ENCODE measurements at regions of chr5 and their contacts with region 1.

Region 1: GRCh38 chr5:151318850-151319732 is 15.5 kb upstream of the SLC36A3 start:
- DNase-seq: peak in 1 of 2 donors; percentile 42
- ATAC-seq: peak in 1 of 2 donors; percentile 14
- H3K4me3 ChIP-seq: no peak overlapping the region
- H3K27ac ChIP-seq: peak overlapping the region in 2 of 4 donors; percentile 81 to 83
- H3K4me1 ChIP-seq: peaks cover 8 to 11% of the 10 kb centered on the region in 2 donors
- H3K27me3 ChIP-seq: no peaks in the 10 kb centered on the region
- CTCF ChIP-seq: no peak
- POLR2A ChIP-seq: no peak

Region 2: GRCh38 chr5:151345808-151346478 is 26.9 kb after region 1 on chr5:
- in situ Hi-C with region 1: no loop called
- intact Hi-C with region 1: loop called (anchors 2 kb)
- DNase-seq: peak; percentile 63 to 79
- ATAC-seq: peak; percentile 57 to 60
- H3K4me3 ChIP-seq: peak overlapping the region; percentile 50 to 63 (median 54)
- H3K27ac ChIP-seq: peak overlapping the region; percentile 92 to 96 (median 94)
- H3K4me1 ChIP-seq: peaks cover 49 to 50% of the 10 kb centered on the region in 2 donors
- H3K27me3 ChIP-seq: no peaks in the 10 kb centered on the region
- CTCF ChIP-seq: no peak
- POLR2A ChIP-seq: no peak

Measured in gastrocnemius medialis (tissue), 4 donors.